HEK293 (cell line): ENCODE measurements at regions of chr18 and their contacts with region 1.

Region 1: GRCh38 chr18:14086458-14087231 is 45.6 kb downstream of the ZNF519 start:
- H3K4me3 ChIP-seq: no peak overlapping the region
- H3K27ac ChIP-seq: no peak overlapping the region
- H3K4me1 ChIP-seq: no peaks in the 10 kb centered on the region
- CTCF ChIP-seq: peak; percentile 82

Region 2: GRCh38 chr18:13813271-13813849 is 273.3 kb before region 1 on chr18:
- CTCF ChIA-PET with region 1: interaction called, 187 read pairs
- POLR2A ChIA-PET with region 1: no interaction called
- H3K4me3 ChIP-seq: no peak overlapping the region
- H3K27ac ChIP-seq: no peak overlapping the region
- H3K4me1 ChIP-seq: no peaks in the 10 kb centered on the region
- CTCF ChIP-seq: peak; percentile 68; the same call in 1 of the 2 replicates

Region 3: DNA sequence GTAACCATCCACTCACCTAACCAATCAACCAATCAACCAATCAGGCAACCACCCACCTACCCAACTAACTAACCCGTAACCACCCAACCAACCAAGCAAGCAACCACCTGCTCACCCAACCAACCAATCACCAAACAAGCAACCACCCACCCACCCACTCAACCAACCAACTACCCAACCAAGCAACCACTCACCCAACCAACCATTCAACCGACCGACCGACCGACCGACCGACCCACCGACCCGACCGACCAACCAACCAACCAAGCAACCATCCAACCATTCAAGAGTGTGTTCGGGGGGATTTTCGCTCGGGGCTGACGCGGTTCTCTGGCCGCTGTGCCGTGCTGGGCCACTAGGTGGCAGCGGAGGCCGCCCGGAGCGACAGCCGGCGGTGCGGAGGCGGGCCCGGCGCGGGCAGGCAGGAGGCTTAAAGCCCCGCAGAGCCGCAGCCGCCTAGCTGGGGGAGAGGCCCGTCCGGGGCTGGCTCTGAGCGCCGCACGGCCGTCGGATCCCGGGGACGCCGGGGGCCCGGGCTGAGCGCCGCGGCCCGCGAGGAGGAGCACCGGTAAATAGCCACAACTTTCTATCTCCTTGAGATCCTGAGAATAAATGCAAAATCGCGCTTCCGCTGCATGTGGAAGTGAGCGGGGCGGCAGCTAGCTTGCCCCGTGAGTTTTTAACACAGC is 262.8 kb before region 1 on chr18 and contains the start of gene MC5R:
- CTCF ChIA-PET with region 1: interaction called, 70 read pairs
- POLR2A ChIA-PET with region 1: no interaction called
- H3K4me3 ChIP-seq: peak within 1 kb of the TSS; percentile 11
- H3K27ac ChIP-seq: no peak within 1 kb of the TSS
- H3K4me1 ChIP-seq: no peaks in the 10 kb centered on the region
- CTCF ChIP-seq: peak; percentile 92

Region 4: DNA sequence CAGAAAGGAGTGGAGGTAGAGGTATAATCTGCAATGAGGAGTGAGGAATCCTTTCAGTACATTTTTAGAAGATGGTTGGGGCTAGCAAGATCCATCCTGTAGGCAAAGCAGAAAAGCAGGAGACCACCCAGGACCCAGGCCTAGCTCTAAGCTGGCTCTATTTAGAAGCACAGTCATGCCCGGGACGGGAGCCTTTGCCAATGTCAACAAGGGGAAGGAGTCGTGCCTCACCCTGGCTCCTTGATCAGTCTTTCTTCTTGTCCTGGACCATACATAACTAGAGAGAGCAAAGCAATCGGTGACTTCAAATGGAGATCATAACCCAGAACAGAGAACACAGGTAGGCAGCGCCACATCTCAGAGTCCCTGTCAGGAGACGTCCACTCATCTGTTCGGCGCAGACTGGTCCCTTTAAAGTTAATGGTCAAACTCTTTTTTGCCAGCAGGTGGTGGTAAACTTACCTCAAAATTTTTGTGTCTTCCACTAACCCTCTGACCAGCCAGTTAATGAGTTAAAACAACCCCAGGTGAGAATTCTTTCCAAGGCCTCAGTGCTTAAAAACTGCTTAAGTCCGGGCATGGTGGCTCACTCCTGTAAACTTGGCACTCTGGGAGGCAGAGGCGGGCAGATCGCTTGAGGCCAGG is 254.7 kb before region 1 on chr18:
- CTCF ChIA-PET with region 1: interaction called, 68 read pairs
- POLR2A ChIA-PET with region 1: no interaction called
- H3K4me3 ChIP-seq: no peak overlapping the region
- H3K27ac ChIP-seq: no peak overlapping the region
- H3K4me1 ChIP-seq: no peaks in the 10 kb centered on the region
- CTCF ChIP-seq: no peak

Region 5: DNA sequence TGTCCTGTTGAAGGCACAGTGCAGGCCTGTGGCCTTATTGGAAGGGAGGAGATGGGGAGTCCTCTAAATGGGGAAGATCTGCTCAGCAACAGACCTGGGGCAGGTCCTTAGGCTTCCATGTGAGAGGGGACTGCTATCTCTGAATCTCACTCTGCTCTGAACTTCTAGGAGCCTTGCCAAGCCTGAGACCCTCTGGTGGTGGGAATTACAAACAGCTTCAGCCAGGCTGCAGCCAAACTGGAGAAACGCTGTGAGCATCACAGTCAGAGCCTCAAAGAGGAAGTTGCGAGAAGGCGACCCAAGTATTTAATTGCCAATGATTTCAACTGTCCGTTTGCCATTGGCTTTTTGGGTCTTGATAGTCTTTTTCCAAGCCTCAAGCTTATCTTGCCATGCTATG is 104.5 kb before region 1 on chr18:
- CTCF ChIA-PET with region 1: interaction called, 13 read pairs
- POLR2A ChIA-PET with region 1: no interaction called
- H3K4me3 ChIP-seq: no peak overlapping the region
- H3K27ac ChIP-seq: no peak overlapping the region
- H3K4me1 ChIP-seq: no peaks in the 10 kb centered on the region
- CTCF ChIP-seq: no peak; the same call in 1 of the 2 replicates

Region 6: GRCh38 chr18:14074187-14074586 is 12.5 kb before region 1 on chr18:
- CTCF ChIA-PET with region 1: interaction called, 20 read pairs
- POLR2A ChIA-PET with region 1: no interaction called
- H3K4me3 ChIP-seq: no peak overlapping the region
- H3K27ac ChIP-seq: no peak overlapping the region
- H3K4me1 ChIP-seq: no peaks in the 10 kb centered on the region
- CTCF ChIP-seq: no peak

Region 7: GRCh38 chr18:14100503-14101286 is 14.1 kb after region 1 on chr18:
- CTCF ChIA-PET with region 1: interaction called, 15 read pairs
- POLR2A ChIA-PET with region 1: no interaction called
- H3K4me3 ChIP-seq: no peak overlapping the region
- H3K27ac ChIP-seq: no peak overlapping the region
- H3K4me1 ChIP-seq: no peaks in the 10 kb centered on the region
- CTCF ChIP-seq: no peak